PC-9 (cell line): ENCODE measurements at regions of chr17 and their contacts with region 1.

Region 1: GRCh38 chr17:48472411-48473281 is 42.6 kb upstream of the SKAP1 start:
- DNase-seq: peak; percentile 63 to 96
- H3K4me3 ChIP-seq: peak overlapping the region; percentile 16; the same call in 1 of the 2 replicates
- H3K27ac ChIP-seq: peak overlapping the region; percentile 95
- H3K4me1 ChIP-seq: peaks cover 38% of the 10 kb centered on the region
- H3K27me3 ChIP-seq: no peaks in the 10 kb centered on the region
- CTCF ChIP-seq: no peak

Region 2: GRCh38 chr17:48483471-48484131 is 11.0 kb after region 1 on chr17:
- CTCF ChIA-PET with region 1: no interaction called
- POLR2A ChIA-PET with region 1: no interaction called
- intact Hi-C with region 1: loop called (anchors 1 kb)
- DNase-seq: peak; percentile 77 to 93
- H3K4me3 ChIP-seq: no peak overlapping the region; the same call in 1 of the 2 replicates
- H3K27ac ChIP-seq: peak overlapping the region; percentile 82
- H3K4me1 ChIP-seq: peaks cover 34% of the 10 kb centered on the region
- H3K27me3 ChIP-seq: no peaks in the 10 kb centered on the region
- CTCF ChIP-seq: no peak

Region 3: GRCh38 chr17:48500966-48501426 is 28.4 kb after region 1 on chr17:
- CTCF ChIA-PET with region 1: interaction called, 13 read pairs
- POLR2A ChIA-PET with region 1: no interaction called
- intact Hi-C with region 1: no loop called
- DNase-seq: no peak
- H3K4me3 ChIP-seq: no peak overlapping the region
- H3K27ac ChIP-seq: no peak overlapping the region
- H3K4me1 ChIP-seq: peaks cover 77% of the 10 kb centered on the region
- H3K27me3 ChIP-seq: no peaks in the 10 kb centered on the region
- CTCF ChIP-seq: no peak